ENCODE measurements at regions of chr2 and their contacts with region 1.

Region 1: GRCh38 chr2:64453770-64454385 is at the start of gene LGALSL:
- DNase-seq: peak; percentile 86
- H3K4me3 ChIP-seq: peak within 1 kb of the TSS; percentile 58 to 92 (median 90)
- H3K27ac ChIP-seq: peak within 1 kb of the TSS; percentile 94 to 98 (median 97)
- H3K4me1 ChIP-seq: peaks cover 0 to 21% (median 15%) of the 10 kb centered on the region in 4 donors
- H3K27me3 ChIP-seq: no peaks in the 10 kb centered on the region
- CTCF ChIP-seq: no peak
- EP300 ChIP-seq: no peak
- POLR2A ChIP-seq: peak; percentile 36 to 37
- total RNA-seq, gene LGALSL: 7.1 to 10.4 (median 9.0) TPM

Region 2: DNA sequence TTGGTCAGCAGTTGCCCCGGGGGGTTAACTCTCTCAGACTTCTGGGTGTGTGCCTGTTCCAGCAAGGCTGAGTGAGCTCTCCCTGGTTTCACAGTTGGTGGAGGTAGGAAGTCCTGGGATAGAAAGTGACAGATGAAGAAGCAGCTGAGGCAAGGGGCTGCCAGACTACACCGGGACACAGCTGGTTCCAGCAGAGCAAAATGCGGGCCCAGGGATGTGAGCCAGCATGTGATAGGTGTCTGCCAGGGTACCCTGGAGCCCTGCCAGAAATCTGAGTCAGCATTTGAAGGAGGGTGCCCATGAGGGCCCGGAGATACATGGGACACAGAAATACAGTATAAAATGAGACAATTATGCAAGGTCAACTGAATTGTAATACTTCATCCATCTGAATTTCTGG is 79.2 kb before region 1 on chr2:
- intact Hi-C with region 1: no loop called
- DNase-seq: no peak
- H3K4me3 ChIP-seq: no peak overlapping the region
- H3K27ac ChIP-seq: no peak overlapping the region
- H3K4me1 ChIP-seq: no peaks in the 10 kb centered on the region
- H3K27me3 ChIP-seq: peaks cover 0 to 2% (median 0%) of the 10 kb centered on the region in 3 donors
- CTCF ChIP-seq: no peak
- EP300 ChIP-seq: no peak
- POLR2A ChIP-seq: no peak

Region 3: GRCh38 chr2:64404002-64404731 is 49.7 kb before region 1 on chr2:
- intact Hi-C with region 1: loop called (anchors 2 kb)
- DNase-seq: peak; percentile 90
- H3K4me3 ChIP-seq: no peak overlapping the region
- H3K27ac ChIP-seq: peak overlapping the region; percentile 68 to 75 (median 73)
- H3K4me1 ChIP-seq: peaks cover 0 to 42% (median 23%) of the 10 kb centered on the region in 4 donors
- H3K27me3 ChIP-seq: no peaks in the 10 kb centered on the region
- CTCF ChIP-seq: no peak
- EP300 ChIP-seq: peak in 1 of 4 donors; percentile 11
- POLR2A ChIP-seq: no peak

Region 4: DNA sequence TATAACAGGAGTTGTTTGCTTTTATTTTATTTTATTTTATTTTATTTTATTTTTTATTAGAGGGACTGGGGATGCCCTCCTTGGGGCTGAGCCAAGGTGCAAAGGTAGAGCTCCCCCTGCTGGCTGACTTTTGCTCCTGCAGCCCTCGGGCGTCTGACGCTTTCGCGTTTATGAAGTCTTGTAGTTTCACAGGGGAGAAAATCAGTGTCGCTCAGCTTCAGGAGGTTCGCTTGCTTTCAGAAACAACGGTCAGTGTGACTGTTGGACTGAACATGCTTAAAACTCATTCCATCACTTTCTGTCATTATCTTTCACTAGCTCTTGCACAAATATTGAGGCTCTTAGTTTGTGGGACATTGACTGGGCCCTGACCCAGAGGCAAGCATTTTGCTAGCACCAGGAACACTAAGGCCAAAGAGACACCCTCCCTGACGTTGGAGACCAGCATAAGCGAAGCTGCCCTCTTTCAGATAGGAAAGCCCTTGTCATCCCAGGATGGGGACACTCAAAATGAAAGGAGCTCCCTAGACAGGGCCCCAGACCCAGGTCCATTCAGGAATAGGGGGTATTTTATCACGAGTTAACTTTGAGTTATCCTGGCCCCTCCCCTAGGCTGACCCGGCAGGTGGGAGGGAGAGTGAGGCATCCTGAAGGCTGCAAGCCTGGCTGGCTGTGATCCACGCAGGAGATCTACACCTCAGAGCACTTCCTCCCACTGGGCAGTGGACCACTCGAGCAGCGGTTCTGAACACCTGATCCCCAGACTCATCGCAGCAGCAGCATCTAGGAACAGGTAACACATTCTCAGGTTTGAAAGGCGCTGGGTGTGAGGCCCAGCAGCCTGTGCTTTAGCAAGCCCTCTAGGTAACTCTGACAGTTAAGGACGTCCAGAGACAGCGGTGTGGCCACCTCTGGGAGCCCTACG is 34.4 kb after region 1 on chr2:
- intact Hi-C with region 1: loop called (anchors 5 kb)
- DNase-seq: peak; percentile 76
- H3K4me3 ChIP-seq: no peak overlapping the region
- H3K27ac ChIP-seq: no peak overlapping the region
- H3K4me1 ChIP-seq: peaks cover 0 to 21% (median 14%) of the 10 kb centered on the region in 4 donors
- H3K27me3 ChIP-seq: no peaks in the 10 kb centered on the region
- CTCF ChIP-seq: peak; percentile 71 to 94 (median 94)
- EP300 ChIP-seq: no peak
- POLR2A ChIP-seq: no peak

Measured in sigmoid colon (tissue), 7 donors.